ENCODE measurements at regions of chr4 and their contacts with region 1.

Region 1: GRCh38 chr4:1249148-1249730 is 309 bp upstream of the CTBP1 start:
- DNase-seq: peak; percentile 79 to 92 (median 90)
- ATAC-seq: peak; percentile 80
- H3K4me3 ChIP-seq: peak overlapping the region; percentile 82
- H3K4me3 Mint-ChIP-seq: peak overlapping the region; percentile 80 to 93 (median 88)
- H3K27ac ChIP-seq: peak overlapping the region; percentile 97
- H3K27ac Mint-ChIP-seq: peak overlapping the region; percentile 90 to 96 (median 94)
- H3K4me1 ChIP-seq: peaks cover 51 to 66% of the 10 kb centered on the region in 2 donors
- H3K4me1 Mint-ChIP-seq: peaks cover 50 to 74% (median 65%) of the 10 kb centered on the region in 7 donors
- H3K27me3 ChIP-seq: no peaks in the 10 kb centered on the region
- H3K27me3 Mint-ChIP-seq: no peaks in the 10 kb centered on the region

Region 2: DNA sequence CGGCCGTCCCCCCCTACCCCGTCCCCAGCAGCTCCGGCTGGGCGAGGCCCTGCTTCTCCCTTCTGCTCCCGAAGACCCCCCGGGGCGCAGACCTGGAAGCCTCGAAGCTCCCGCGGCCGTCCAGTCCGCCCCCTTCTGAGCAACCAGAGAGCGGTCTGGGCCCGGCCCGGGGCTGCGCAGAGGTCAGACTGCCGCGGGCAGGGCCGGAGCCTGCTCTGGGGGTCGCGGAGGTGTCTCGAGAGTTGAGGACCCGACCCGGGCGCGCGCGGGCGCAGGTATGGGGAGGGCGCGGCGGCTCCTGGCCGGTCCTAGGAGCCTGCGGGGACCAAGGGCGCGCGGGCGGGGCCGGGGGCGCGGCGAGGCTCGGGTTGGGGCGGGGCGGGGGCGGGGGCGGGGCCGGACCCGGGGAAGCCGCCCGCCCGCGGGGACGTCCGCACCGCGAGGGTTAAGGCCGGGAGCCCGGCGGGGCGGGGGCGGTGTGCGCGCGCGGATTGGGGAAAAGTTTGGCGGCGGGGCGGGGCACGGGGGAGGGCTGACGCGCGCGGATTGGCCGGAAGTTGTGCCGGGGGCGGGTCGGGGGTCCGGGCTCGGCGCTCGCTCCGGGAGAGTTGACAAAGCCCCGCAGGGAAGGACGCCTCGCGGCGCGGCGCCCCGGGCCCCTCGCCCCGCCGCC is 238.1 kb before region 1 on chr4 and contains the start of gene FGFRL1:
- CTCF ChIA-PET with region 1: no interaction called
- POLR2A ChIA-PET with region 1: no interaction called
- intact Hi-C with region 1: loop called (anchors 5 kb)
- DNase-seq: peak; percentile 78 to 95 (median 87)
- ATAC-seq: peak; percentile 78
- H3K4me3 ChIP-seq: peak within 1 kb of the TSS; percentile 77
- H3K4me3 Mint-ChIP-seq: peak within 1 kb of the TSS; percentile 86 to 97 (median 89)
- H3K27ac ChIP-seq: peak within 1 kb of the TSS; percentile 83
- H3K27ac Mint-ChIP-seq: peak within 1 kb of the TSS; percentile 76 to 96 (median 92)
- H3K4me1 ChIP-seq: peaks cover 0 to 10% of the 10 kb centered on the region in 2 donors
- H3K4me1 Mint-ChIP-seq: peaks cover 15 to 21% (median 18%) of the 10 kb centered on the region in 7 donors
- H3K27me3 ChIP-seq: no peaks in the 10 kb centered on the region
- H3K27me3 Mint-ChIP-seq: peaks cover 24 to 31% (median 27%) of the 10 kb centered on the region in 5 donors
- total RNA-seq, gene FGFRL1: 10.6 to 28.1 (median 22.0) TPM

Region 3: DNA sequence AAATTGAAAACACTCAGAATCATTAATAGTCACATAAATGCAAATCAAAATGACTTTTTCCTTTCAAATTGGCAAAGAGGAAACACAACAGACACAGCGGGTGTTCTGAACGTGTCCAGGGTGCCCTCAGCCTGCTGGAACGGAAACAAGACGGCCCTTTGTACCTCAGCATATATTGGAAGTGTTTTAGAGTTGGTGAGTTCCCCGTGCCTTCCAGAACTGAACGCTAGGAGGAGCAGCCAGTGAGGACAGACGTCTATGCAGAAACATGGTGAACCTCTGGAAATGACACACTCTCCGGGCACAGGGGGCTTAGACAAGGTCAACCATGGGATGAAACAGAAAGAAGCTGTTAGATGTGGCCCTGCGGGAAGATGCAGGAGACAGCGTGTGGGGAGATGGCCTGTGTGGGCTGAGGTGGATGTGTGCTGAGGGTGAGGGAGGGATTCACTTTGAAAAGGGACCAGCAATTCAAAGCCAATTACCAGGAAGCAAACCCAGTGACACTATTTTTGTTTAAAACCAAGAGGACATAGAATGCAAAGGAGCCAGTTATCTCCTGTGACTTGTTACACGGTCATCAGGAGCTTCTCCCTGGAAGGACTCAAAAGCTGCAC is 176.3 kb before region 1 on chr4:
- CTCF ChIA-PET with region 1: no interaction called
- POLR2A ChIA-PET with region 1: no interaction called
- intact Hi-C with region 1: no loop called
- DNase-seq: peak in 8 of 9 donors; percentile 38 to 66 (median 54)
- ATAC-seq: peak; percentile 90
- H3K4me3 ChIP-seq: no peak overlapping the region
- H3K4me3 Mint-ChIP-seq: peak overlapping the region in 2 of 10 donors; percentile 0 to 9
- H3K27ac ChIP-seq: no peak overlapping the region
- H3K27ac Mint-ChIP-seq: peak overlapping the region in 6 of 9 donors; percentile 1 to 38 (median 18)
- H3K4me1 ChIP-seq: peaks cover 0 to 7% of the 10 kb centered on the region in 2 donors
- H3K4me1 Mint-ChIP-seq: peaks cover 7 to 15% (median 14%) of the 10 kb centered on the region in 7 donors
- H3K27me3 ChIP-seq: no peaks in the 10 kb centered on the region
- H3K27me3 Mint-ChIP-seq: peaks cover 8 to 29% (median 13%) of the 10 kb centered on the region in 5 donors

Region 4: DNA sequence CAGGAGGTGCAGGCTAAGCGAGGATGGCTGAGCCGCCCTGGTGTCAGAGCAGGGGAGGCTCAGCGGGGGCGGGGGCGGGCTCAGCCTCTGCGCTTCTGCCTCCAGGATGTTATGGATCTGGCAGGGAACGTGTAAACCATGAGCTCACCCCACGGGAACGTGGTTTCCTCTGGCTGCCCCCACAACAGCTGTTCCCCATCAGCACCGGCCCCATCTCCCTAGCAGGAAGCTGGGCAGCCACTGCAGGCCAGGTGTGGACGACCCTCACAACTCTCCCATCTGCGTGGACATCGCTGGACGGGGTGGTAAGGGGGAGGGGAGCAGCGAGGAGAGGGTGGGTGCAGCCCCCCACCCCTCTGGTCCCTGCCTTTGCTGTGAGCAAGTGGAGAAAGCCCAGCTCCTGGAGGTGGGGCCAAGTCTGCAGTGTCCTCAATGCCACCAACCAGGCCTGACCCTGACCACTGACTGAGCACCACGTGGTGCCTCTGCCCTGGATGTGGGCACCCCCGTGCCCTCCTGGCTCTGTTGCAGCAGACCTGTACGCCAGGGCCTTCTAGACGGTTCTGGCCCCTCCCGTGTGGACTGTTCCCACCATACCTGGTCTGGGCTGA is 48.7 kb before region 1 on chr4:
- CTCF ChIA-PET with region 1: no interaction called
- POLR2A ChIA-PET with region 1: interaction called, 21 read pairs
- intact Hi-C with region 1: loop called (anchors 1 kb)
- DNase-seq: peak in 1 of 9 donors; percentile 26
- ATAC-seq: no peak
- H3K4me3 ChIP-seq: peak overlapping the region; percentile 85
- H3K4me3 Mint-ChIP-seq: peak overlapping the region; percentile 29 to 93 (median 84)
- H3K27ac ChIP-seq: peak overlapping the region; percentile 68
- H3K27ac Mint-ChIP-seq: peak overlapping the region in 5 of 9 donors; percentile 19 to 99 (median 59)
- H3K4me1 ChIP-seq: peaks cover 21 to 59% of the 10 kb centered on the region in 2 donors
- H3K4me1 Mint-ChIP-seq: peaks cover 12 to 57% (median 43%) of the 10 kb centered on the region in 7 donors
- H3K27me3 ChIP-seq: no peaks in the 10 kb centered on the region
- H3K27me3 Mint-ChIP-seq: no peaks in the 10 kb centered on the region

Region 5: DNA sequence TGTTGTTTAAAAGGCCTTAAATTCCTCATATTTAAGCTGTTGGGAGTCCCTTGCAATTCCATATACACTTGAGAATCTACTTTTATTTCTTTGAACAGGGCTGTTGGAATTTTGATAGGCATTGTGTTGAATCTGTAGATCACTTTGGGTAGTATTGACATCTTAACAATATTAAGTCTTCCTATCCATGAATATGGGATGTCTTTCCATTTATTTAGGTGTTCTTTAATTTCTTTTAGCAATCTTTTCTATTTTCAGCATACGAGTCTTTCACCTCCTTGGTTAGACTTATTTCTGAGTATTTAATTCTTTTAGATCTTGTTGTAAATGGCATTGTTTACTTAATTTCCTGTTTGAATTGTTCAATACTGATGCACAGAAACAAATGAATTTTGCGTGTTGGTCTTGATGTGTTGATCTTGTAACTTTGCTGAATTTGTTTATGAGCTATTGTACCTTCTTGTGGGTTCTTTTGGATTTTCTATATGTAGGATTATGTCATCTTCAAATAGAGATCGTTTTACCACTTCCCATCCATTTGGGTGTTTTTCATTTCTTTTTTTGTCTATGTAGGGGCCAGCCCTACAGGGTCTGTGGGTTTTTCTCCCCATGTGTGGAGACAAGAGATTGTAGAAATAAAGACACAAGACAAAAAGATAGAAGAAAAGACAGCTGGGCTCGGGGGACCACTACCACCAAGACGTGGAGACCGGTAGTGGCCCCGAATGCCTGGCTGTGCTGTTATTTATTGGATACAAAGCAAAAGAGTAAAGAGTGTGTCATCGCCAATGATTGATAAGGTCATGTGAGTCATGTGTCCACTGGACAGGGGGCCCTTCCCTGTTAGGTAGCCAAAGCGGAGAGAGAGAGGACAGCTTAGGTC is 17.9 kb after region 1 on chr4:
- CTCF ChIA-PET with region 1: interaction called, 12 read pairs
- POLR2A ChIA-PET with region 1: interaction called, 44 read pairs
- intact Hi-C with region 1: loop called (anchors 1 kb)
- DNase-seq: peak in 5 of 9 donors; percentile 36 to 59 (median 48)
- ATAC-seq: peak; percentile 73
- H3K4me3 ChIP-seq: peak overlapping the region; percentile 53
- H3K4me3 Mint-ChIP-seq: peak overlapping the region; percentile 49 to 87 (median 72)
- H3K27ac ChIP-seq: peak overlapping the region; percentile 45
- H3K27ac Mint-ChIP-seq: peak overlapping the region; percentile 40 to 96 (median 82)
- H3K4me1 ChIP-seq: peaks cover 0 to 7% of the 10 kb centered on the region in 2 donors
- H3K4me1 Mint-ChIP-seq: peaks cover 8 to 22% (median 15%) of the 10 kb centered on the region in 7 donors
- H3K27me3 ChIP-seq: no peaks in the 10 kb centered on the region
- H3K27me3 Mint-ChIP-seq: no peaks in the 10 kb centered on the region

Region 6: DNA sequence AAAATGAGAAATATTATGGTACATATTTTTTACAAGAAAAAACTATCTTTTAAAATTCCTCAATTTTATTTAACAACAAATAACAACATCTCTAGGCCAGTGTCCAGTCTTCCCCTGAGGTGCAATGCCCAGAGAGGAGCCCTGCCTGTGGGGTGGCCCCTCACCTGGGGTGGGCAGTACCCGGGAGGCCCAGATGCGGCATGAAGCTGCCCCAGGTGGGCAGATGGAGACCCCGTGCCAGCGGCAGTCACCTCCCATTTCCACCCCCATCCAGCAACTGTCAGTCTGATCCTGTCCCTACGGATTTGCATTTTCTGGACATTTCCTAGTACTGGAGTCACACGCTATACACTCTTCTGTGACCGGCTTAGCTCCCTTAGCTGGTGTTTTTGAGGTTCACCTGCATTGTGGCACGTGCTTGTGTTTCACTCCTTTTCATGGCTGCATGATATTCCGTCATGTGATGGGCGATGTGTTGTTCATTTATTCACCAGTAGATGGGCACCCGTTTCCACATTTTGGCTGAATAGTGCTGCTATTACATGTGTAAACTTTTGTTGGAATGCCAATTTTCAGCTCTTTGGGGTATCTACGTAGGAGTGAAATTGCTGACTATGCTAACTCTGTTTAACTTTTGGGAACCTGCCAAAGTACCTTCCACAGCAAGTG is 28.6 kb after region 1 on chr4:
- CTCF ChIA-PET with region 1: no interaction called
- POLR2A ChIA-PET with region 1: no interaction called
- intact Hi-C with region 1: no loop called
- DNase-seq: peak in 1 of 9 donors; percentile 8
- ATAC-seq: no peak
- H3K4me3 ChIP-seq: no peak overlapping the region
- H3K4me3 Mint-ChIP-seq: no peak overlapping the region
- H3K27ac ChIP-seq: no peak overlapping the region
- H3K27ac Mint-ChIP-seq: no peak overlapping the region
- H3K4me1 ChIP-seq: no peaks in the 10 kb centered on the region
- H3K4me1 Mint-ChIP-seq: no peaks in the 10 kb centered on the region
- H3K27me3 ChIP-seq: no peaks in the 10 kb centered on the region
- H3K27me3 Mint-ChIP-seq: no peaks in the 10 kb centered on the region

Region 7: DNA sequence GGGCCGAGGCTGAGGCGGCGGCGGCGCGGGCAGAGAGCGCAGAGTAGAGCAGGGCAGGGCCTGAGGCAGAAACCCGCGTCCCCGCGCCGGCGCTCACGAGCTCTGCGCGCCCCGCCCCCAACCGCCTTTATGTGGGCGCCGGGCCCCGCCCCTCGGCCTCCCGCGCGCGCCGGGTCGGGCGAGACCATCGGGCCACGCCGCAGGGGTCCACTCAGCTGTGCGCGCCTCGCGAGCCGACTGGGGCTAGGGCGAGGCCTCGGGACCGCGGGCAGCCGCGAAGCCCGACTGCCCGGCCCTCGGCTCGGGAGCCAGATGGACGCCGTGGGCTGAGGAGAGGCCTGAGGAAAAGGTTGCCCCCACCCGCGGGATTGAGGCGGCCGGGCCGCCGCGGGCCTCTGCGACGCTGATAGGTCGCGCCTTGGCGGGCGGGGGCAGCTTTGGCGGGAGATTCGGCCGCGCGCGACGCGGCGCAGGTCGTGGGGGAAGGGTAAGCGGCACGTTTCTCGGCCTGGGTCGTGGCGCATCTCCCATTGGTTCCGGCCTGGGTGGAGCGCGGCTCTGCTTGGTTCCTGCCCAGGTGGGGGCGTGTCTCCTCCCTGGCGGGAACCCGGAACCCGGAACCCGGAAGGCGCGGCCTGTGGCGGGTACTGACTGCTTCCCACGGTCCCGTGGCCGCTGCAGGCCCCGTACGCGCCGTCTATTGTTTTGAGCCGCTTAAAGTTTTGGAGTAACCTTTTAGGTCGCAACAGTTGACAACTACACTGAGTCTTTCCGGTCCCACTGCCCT is 463.2 kb after region 1 on chr4 and contains the start of gene SLBP:
- CTCF ChIA-PET with region 1: no interaction called
- POLR2A ChIA-PET with region 1: no interaction called
- intact Hi-C with region 1: loop called (anchors 1 to 2 kb)
- DNase-seq: peak; percentile 98 to 99 (median 98)
- ATAC-seq: peak; percentile 92
- H3K4me3 ChIP-seq: peak within 1 kb of the TSS; percentile 100
- H3K4me3 Mint-ChIP-seq: peak within 1 kb of the TSS; percentile 89 to 98 (median 94)
- H3K27ac ChIP-seq: peak within 1 kb of the TSS; percentile 99
- H3K27ac Mint-ChIP-seq: peak within 1 kb of the TSS; percentile 90 to 98 (median 94)
- H3K4me1 ChIP-seq: peaks cover 32 to 34% of the 10 kb centered on the region in 2 donors
- H3K4me1 Mint-ChIP-seq: peaks cover 11 to 67% (median 59%) of the 10 kb centered on the region in 7 donors
- H3K27me3 ChIP-seq: no peaks in the 10 kb centered on the region
- H3K27me3 Mint-ChIP-seq: no peaks in the 10 kb centered on the region
- total RNA-seq, gene SLBP: 29.5 to 103 (median 30.3) TPM

Region 8: GRCh38 chr4:1870578-1871443 is 621.6 kb after region 1 on chr4 and contains the start of gene NSD2:
- CTCF ChIA-PET with region 1: no interaction called
- POLR2A ChIA-PET with region 1: no interaction called
- intact Hi-C with region 1: loop called in 1 of 2 experiments (anchors 1 kb)
- DNase-seq: peak; percentile 79 to 95 (median 86)
- ATAC-seq: peak; percentile 86
- H3K4me3 ChIP-seq: peak within 1 kb of the TSS; percentile 86
- H3K4me3 Mint-ChIP-seq: peak within 1 kb of the TSS; percentile 84 to 98 (median 89)
- H3K27ac ChIP-seq: peak within 1 kb of the TSS; percentile 99
- H3K27ac Mint-ChIP-seq: peak within 1 kb of the TSS; percentile 91 to 96 (median 95)
- H3K4me1 ChIP-seq: peaks cover 15 to 20% of the 10 kb centered on the region in 2 donors
- H3K4me1 Mint-ChIP-seq: peaks cover 12 to 37% (median 34%) of the 10 kb centered on the region in 7 donors
- H3K27me3 ChIP-seq: no peaks in the 10 kb centered on the region
- H3K27me3 Mint-ChIP-seq: peaks cover 0 to 4% (median 0%) of the 10 kb centered on the region in 5 donors
- total RNA-seq, gene NSD2: 35.4 to 207 (median 38.5) TPM

Measured in naive thymus-derived CD4-positive, alpha-beta T cell (primary cell).